ENCODE measurements at regions of chr9 and their contacts with region 1.

Region 1: DNA sequence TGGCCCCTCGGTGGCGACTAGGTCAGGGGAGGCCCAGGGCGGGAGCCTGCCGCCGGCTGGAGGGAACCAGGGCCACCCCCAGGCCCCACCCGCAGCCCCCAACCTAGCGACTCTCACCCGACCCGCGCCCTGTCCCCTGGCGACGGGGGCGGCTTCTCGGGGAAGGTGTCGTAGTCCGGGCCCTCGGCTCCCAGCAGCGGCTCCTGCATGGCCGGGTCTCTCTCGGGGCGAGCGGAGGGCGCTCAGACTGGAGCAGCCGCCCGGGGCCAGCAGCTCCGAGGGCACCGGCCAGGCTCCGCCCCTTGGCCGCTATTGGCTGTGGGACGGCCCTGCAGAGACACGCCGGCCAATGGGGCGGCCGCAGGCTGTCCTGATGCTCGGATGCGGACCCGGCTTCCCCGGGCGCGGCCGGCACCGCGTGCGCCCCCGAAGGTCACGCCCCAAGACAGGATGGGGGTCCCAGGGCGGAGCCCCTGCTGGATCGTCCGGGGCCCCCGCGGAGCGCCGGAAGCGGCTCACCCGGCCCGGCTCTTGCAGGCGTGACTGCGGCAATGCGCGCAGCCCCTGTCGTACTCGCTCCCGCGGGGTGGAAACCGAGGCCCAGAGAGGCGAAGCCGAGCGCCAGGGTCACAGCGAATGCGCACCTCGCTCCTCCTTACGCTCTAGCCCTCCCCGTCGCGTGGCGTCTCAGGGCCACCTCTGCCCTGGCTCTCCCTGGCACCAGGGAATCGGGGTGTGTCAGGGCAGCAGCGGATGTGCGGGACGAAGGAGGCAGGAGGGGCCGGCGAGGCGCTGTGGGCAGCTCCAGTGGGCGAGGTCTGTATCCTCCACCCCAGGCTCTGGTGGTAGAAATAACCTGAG is at the start of gene SLC2A6:
- DNase-seq: no peak
- ATAC-seq: peak; percentile 97
- H3K4me3 ChIP-seq: peak within 1 kb of the TSS; percentile 94
- H3K27ac ChIP-seq: peak within 1 kb of the TSS; percentile 83
- H3K4me1 ChIP-seq: peaks cover 15% of the 10 kb centered on the region
- H3K27me3 ChIP-seq: no peaks in the 10 kb centered on the region
- CTCF ChIP-seq: no peak
- EP300 ChIP-seq: no peak
- POLR2A ChIP-seq: peak; percentile 88
- RAD21 ChIP-seq: no peak
- polyA plus RNA-seq, gene SLC2A6: 1.1 to 6.1 TPM

Region 2: GRCh38 chr9:132908635-132909034 is 570.4 kb before region 1 on chr9:
- CTCF ChIA-PET with region 1: no interaction called
- POLR2A ChIA-PET with region 1: no interaction called
- RAD21 ChIA-PET with region 1: no interaction called
- SMC1A ChIA-PET with region 1: no interaction called
- in situ Hi-C with region 1: no loop called
- intact Hi-C with region 1: no loop called
- DNase-seq: no peak
- ATAC-seq: no peak
- H3K4me3 ChIP-seq: no peak overlapping the region
- H3K27ac ChIP-seq: no peak overlapping the region
- H3K4me1 ChIP-seq: no peaks in the 10 kb centered on the region
- H3K27me3 ChIP-seq: no peaks in the 10 kb centered on the region
- CTCF ChIP-seq: no peak
- EP300 ChIP-seq: no peak
- POLR2A ChIP-seq: no peak
- RAD21 ChIP-seq: no peak

Region 3: DNA sequence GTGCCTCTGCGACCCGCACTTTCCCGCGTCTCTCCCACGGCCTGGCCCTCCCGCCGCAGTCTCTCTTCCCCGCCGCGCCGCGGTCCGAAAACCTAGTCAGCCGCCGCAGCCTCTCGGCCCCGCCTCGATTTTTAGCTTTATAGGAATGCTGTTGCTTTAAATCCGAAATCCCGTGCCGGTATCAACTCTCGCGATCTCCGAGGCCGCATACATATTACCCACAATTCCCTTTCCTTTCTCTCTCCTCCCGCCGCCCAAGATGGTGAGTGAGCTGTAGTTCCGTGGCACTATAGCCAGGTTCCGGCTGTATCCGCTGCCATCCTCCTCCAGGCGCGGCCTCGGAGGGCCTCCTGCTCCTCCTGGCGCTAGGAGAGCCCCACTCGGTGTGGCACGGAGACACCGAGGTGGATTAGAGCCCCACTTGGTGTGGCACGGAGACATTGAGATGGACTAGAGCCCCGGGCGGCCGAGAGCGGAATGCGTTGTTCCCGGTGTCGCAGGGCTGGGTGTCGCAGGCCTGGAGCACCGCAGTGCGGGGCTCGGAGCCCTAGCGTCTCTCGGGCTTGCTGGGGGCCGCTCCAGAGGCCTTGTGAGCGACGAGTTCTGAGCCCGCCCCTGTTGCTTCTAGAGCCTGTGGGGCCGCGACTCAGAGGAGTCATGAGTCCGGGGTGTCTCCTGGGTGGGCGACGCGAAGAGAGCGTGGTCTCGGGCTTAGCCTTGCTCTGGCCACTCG is 130.9 kb before region 1 on chr9 and contains the starts of genes MED22 and RPL7A:
- CTCF ChIA-PET with region 1: interaction called, 3 read pairs
- POLR2A ChIA-PET with region 1: no interaction called
- RAD21 ChIA-PET with region 1: no interaction called
- SMC1A ChIA-PET with region 1: no interaction called
- in situ Hi-C with region 1: no loop called
- intact Hi-C with region 1: loop called (anchors 5 kb)
- DNase-seq: peak; percentile 91
- ATAC-seq: peak; percentile 84
- H3K4me3 ChIP-seq: peak within 1 kb of the TSS; percentile 100
- H3K27ac ChIP-seq: peak within 1 kb of the TSS; percentile 96
- H3K4me1 ChIP-seq: peaks cover 12% of the 10 kb centered on the region
- H3K27me3 ChIP-seq: no peaks in the 10 kb centered on the region
- CTCF ChIP-seq: no peak
- EP300 ChIP-seq: no peak
- POLR2A ChIP-seq: peak; percentile 99
- RAD21 ChIP-seq: no peak
- polyA plus RNA-seq, gene MED22: 1.4 to 3.4 TPM
- polyA plus RNA-seq, gene RPL7A: 3,258 to 3,500 TPM

Region 4: GRCh38 chr9:133417541-133418461 is 61.3 kb before region 1 on chr9 and contains the start of gene REXO4:
- CTCF ChIA-PET with region 1: interaction called, 3 read pairs
- POLR2A ChIA-PET with region 1: interaction called, 12 read pairs
- RAD21 ChIA-PET with region 1: interaction called, 10 read pairs
- SMC1A ChIA-PET with region 1: interaction called, 3 read pairs
- in situ Hi-C with region 1: no loop called
- intact Hi-C with region 1: loop called (anchors 5 kb)
- DNase-seq: peak; percentile 73
- ATAC-seq: peak; percentile 74
- H3K4me3 ChIP-seq: peak within 1 kb of the TSS; percentile 89
- H3K27ac ChIP-seq: peak within 1 kb of the TSS; percentile 90
- H3K4me1 ChIP-seq: peaks cover 51% of the 10 kb centered on the region
- H3K27me3 ChIP-seq: no peaks in the 10 kb centered on the region
- CTCF ChIP-seq: no peak
- EP300 ChIP-seq: no peak
- POLR2A ChIP-seq: peak; percentile 87
- RAD21 ChIP-seq: no peak
- polyA plus RNA-seq, gene REXO4: 2.7 to 8.4 TPM

Region 5: DNA sequence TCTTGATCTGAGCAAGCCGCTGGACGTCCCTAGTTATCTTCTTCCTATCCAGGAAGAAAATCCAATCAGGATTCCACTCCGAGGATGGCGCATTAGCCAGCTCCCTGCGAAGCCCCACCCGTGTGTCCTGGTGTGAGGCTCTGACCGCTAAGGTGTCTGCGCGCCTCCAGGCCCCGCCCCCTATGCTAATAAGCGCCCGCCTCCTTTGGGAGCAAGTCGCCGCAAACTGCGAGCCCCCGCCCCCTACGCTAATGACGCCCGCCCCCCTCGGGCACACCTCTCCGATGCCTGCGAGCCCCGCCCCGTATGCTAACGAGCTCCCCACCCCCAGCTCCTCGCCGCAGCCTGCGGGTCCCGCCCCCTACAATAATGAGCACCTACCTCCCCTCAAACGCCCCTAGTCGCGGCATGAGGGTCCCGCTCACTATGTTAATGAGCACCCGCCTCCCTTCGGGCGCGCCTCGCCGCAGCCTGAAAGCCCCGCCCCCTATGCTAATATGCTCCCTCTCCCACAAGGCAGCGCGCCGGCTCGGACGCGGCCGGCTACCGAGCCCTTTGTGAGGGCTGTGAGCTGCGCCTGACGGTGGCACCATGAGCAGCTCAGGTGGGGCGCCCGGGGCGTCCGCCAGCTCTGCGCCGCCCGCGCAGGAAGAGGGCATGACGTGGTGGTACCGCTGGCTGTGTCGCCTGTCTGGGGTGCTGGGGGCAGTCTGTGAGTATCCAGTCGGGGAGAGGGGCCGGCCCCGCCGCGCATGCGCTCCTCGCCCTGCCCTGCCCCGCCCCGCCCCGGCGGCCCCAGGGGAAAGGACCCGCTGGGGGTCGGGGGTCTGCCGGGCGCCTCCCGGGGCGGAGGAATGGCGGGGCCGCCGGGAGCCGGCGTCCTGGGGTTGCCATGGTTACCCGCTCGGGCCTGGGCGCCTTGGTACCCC is 19.3 kb before region 1 on chr9 and contains the start of gene CACFD1:
- CTCF ChIA-PET with region 1: interaction called, 17 read pairs
- POLR2A ChIA-PET with region 1: interaction called, 27 read pairs
- RAD21 ChIA-PET with region 1: interaction called, 20 read pairs
- SMC1A ChIA-PET with region 1: interaction called, 9 read pairs
- in situ Hi-C with region 1: no loop called
- intact Hi-C with region 1: loop called (anchors 1 kb)
- DNase-seq: peak; percentile 65
- ATAC-seq: peak; percentile 88
- H3K4me3 ChIP-seq: peak within 1 kb of the TSS; percentile 97
- H3K27ac ChIP-seq: peak within 1 kb of the TSS; percentile 63
- H3K4me1 ChIP-seq: peaks cover 9% of the 10 kb centered on the region
- H3K27me3 ChIP-seq: no peaks in the 10 kb centered on the region; a peak in 2 of 4 replicates
- CTCF ChIP-seq: peak in 1 of 3 experiments; percentile 7; a peak in 1 of 6 replicates
- EP300 ChIP-seq: no peak
- POLR2A ChIP-seq: peak; percentile 83
- RAD21 ChIP-seq: no peak
- polyA plus RNA-seq, gene CACFD1: 0.09 TPM in 1 of 2 experiments, not detected in the other

Measured in GM12878 (cell line).